ENCODE measurements at regions of chr6 and their contacts with region 1.

Region 1: DNA sequence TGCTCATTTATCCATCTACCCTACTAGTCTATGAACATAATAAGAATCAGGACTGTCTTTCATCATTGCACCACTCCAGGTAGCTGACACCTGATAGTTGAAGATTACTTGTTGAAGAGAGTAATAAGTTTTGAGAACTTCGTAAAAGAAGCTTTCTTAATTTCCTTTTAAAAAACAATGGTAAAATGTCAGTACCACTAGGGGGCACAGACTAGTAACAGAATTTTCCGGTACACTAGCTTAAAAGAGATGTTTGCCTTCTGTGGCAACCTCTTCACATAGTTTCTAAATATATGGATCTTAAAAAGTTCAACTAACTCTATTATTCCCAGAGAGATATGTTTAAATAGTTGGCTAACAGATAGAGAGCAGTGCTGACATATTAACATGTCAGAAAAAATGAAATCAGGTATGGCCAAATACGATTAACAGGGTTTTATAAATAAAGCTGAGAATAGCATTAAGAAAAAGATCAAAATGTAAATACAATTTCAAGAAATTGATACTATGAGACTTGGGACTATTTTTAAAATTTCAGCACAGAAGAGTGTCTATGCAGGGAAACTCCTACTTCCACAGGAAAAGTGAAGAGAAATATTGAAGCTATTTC is 5.4 kb upstream of the KCNQ5 start:
- DNase-seq: peak; percentile 52 to 70 (median 65)
- H3K4me3 ChIP-seq: no peak overlapping the region
- H3K27ac ChIP-seq: no peak overlapping the region
- H3K4me1 ChIP-seq: peaks cover 5 to 24% (median 21%) of the 10 kb centered on the region in 4 experiments
- H3K27me3 ChIP-seq: peaks cover 0 to 4% (median 0%) of the 10 kb centered on the region in 5 experiments

Region 2: DNA sequence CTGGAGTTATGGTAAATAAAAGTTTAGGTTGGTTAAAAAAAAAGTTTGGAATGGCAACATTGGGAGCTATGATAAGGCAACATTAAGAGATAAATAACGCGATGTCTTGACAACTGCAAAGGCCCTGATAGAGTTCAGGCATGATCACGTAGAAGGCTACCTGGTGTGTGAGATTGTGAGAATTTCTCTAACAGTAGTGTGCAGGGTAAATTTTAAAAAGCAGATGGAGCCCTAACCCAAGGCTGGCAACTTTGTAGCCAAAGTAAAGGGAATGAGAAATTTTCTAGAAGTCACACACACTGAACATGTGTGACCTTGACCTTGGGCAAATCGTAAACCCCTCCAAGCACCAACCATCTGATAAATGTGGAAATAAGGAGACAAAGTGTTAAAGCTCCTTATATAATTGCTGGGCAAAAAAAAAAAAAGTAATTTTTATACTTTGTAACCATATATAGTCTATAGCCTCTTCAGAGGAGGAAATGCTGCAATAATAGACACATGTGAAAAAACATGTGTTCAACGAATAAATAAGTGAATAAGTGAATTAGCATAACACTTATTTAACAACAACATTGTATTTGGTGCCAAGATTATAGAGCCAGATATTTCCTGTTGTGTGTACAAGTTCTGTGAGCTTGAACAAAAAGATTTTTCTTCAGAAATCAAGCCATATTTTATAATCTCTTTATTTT is 23.6 kb after region 1 on chr6:
- CTCF ChIA-PET with region 1: interaction called, 10 read pairs
- POLR2A ChIA-PET with region 1: no interaction called
- DNase-seq: no peak
- H3K4me3 ChIP-seq: no peak overlapping the region
- H3K27ac ChIP-seq: no peak overlapping the region
- H3K4me1 ChIP-seq: peaks cover 0 to 9% (median 0%) of the 10 kb centered on the region in 4 experiments
- H3K27me3 ChIP-seq: no peaks in the 10 kb centered on the region

Measured in common myeloid progenitor, CD34-positive (primary cell).